ENCODE measurements at regions of chr10 and their contacts with region 1.

Region 1: GRCh38 chr10:75071756-75072155 is 39.7 kb upstream of the SAMD8 start:
- DNase-seq: no peak
- ATAC-seq: no peak
- H3K4me3 ChIP-seq: peak overlapping the region; percentile 66
- H3K27ac ChIP-seq: peak overlapping the region; percentile 85
- H3K4me1 ChIP-seq: peaks cover 26% of the 10 kb centered on the region
- H3K27me3 ChIP-seq: no peaks in the 10 kb centered on the region
- CTCF ChIP-seq: no peak

Region 2: DNA sequence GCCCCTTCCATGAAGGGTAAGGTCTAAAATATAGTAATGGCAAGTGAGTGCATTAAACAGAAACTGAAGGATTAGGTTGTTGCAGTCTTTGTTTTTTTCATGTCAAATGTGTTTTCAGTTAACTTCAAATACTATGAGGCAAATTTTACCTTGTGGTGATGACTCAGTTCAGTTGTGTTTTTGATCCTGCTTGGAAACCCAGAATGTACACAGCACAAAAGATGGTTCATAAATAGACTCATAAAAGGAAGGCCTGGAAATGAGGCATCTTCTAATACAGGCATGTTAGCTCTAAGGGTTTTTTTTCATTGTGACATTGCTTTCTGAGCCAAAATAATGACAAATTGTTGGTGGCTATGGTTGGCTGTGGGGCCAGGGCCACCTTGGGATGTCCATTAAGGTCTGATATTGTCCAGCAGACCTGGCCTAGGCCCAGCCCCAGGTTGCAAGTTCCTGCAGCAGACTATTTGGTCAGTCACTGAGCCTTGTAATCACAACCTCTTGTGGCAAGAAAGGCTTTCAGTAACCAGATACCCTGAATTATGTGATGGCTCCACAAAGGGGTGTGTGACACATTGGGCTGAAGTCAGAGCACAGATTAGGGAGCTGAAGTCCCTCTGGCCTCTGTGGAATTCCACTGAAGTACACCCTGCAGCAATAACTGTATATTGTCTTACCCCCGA is 29.3 kb before region 1 on chr10:
- intact Hi-C with region 1: loop called in 1 of 2 experiments (anchors 2 kb)
- DNase-seq: peak; percentile 53 to 83
- ATAC-seq: peak; percentile 92 to 95 (median 94)
- H3K4me3 ChIP-seq: no peak overlapping the region
- H3K27ac ChIP-seq: peak overlapping the region; percentile 87
- H3K4me1 ChIP-seq: peaks cover 50% of the 10 kb centered on the region
- H3K27me3 ChIP-seq: no peaks in the 10 kb centered on the region
- CTCF ChIP-seq: no peak

Region 3: DNA sequence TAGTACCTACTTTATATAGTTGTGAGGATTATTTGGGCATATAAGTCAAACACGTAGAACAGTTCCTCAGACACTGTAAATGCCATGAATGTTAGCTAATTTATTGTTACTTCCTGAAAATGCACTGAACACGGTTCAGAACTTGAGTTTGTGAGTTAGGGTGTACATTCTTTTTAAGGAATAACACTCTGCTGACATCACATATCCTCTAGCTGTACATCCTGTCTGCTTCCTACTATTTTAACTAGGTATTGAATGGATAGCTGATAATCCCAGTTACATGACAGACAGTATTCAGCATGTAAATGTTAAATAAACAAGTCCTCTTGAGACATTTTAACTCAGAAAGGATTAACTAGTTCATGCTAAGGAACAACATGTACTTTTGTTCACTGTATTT is 55.7 kb after region 1 on chr10:
- intact Hi-C with region 1: no loop called
- DNase-seq: no peak
- ATAC-seq: peak in 1 of 4 donors; percentile 16
- H3K4me3 ChIP-seq: no peak overlapping the region
- H3K27ac ChIP-seq: peak overlapping the region; percentile 7
- H3K4me1 ChIP-seq: peaks cover 61% of the 10 kb centered on the region
- H3K27me3 ChIP-seq: no peaks in the 10 kb centered on the region
- CTCF ChIP-seq: no peak

Region 4: DNA sequence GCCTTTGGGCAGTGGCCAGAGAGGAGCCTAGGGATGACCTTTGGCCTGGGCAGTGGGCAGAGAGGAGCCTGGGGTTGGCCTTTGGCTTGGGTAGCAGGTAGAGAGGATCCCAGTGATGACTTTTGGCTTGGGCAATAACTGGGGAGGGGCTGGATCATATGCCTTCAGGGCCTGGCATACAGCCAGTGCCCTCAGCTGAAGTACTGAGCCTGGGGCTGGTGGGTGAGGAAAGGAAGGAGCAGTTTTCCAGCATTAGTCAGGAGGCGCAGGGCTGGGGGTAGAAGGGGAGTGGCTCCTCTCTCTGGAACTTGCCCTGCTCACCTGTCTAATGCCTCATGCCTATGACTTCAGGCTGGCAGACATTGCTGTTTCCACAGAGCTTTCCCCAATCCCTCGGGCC is 179.2 kb after region 1 on chr10:
- intact Hi-C with region 1: no loop called
- DNase-seq: no peak
- ATAC-seq: no peak
- H3K4me3 ChIP-seq: no peak overlapping the region
- H3K27ac ChIP-seq: no peak overlapping the region
- H3K4me1 ChIP-seq: no peaks in the 10 kb centered on the region
- H3K27me3 ChIP-seq: no peaks in the 10 kb centered on the region
- CTCF ChIP-seq: no peak

Region 5: GRCh38 chr10:75910032-75910431 is 838.3 kb after region 1 on chr10:
- intact Hi-C with region 1: no loop called
- DNase-seq: no peak
- ATAC-seq: no peak
- H3K4me3 ChIP-seq: no peak overlapping the region
- H3K27ac ChIP-seq: no peak overlapping the region
- H3K4me1 ChIP-seq: no peaks in the 10 kb centered on the region
- H3K27me3 ChIP-seq: no peaks in the 10 kb centered on the region
- CTCF ChIP-seq: peak; percentile 43